RWPE1 (cell line): ENCODE measurements at regions of chr9 and their contacts with region 1.

Region 1: DNA sequence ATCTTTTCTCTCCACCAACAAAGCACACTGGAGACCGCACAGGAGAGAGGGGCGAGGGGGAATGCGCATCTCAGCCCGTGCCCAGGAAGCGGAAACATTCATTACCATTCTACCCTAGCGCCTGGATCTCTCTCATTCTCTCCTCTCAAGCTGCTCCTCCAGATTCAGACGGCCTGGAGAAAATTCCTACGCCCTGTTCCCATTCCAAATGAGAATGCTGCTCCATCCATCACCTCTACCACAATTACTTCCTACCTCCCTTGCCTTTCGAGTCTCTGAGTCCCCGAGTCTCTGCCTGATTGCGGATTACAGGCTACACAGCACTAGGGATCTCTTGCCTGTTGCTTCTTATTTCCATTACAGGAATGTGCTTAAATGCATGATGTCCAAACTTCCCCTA is 6.7 kb downstream of the DDX31 start:
- DNase-seq: no peak
- H3K27ac ChIP-seq: no peak overlapping the region
- CTCF ChIP-seq: no peak

Region 2: DNA sequence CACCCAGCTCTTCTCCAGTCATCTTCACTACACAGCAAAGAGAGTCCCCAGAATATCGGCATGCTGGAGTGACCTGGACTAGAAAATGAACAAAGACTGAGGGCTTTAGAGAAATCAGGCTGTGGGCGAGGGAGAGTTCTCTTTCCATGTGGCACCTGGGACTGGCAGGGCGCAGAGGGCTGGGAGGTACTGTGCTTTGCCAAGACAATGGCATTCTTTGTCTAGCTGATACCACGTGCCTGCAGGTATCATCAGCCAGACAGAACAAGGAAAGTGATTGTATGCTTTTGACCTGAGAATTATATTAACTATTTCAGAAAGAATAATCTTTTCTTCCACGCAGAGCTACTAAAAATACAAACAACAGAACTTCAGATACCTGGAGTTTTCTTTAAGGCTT is 23.8 kb before region 1 on chr9:
- CTCF ChIA-PET with region 1: no interaction called
- POLR2A ChIA-PET with region 1: no interaction called
- DNase-seq: no peak
- H3K27ac ChIP-seq: no peak overlapping the region; the same call in 1 of the 2 replicates
- CTCF ChIP-seq: no peak

Region 3: DNA sequence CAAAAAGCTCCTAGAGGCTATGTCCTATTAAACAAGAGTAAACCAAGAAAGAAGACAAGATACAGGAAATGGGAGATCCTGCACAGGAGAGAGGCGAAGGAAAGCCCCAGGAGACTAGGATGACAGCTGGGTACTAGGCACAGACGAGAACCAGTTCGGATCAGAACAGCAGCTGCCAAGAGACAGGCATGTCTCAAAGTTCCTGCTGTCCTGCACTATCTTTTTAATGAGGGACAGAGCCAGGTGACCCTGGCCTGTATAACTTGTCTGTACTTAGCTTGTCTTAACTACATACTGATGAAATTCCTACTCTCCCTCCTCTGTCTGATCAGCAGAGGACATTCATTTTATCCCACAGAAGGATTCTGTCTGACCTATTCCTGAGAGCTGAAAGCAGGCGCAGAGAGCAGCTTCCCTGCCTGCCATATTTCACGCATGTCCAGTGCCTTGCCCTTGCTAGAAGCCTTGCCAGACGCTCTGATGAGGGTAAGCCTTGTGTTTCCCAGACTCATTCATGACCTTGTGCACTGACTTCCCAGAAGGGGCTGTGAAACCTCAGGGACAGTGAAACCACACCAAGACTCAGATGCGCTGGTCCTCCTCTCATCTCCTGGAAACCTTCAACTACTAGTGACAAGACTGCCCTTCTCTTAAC is 256.6 kb after region 1 on chr9:
- CTCF ChIA-PET with region 1: no interaction called
- POLR2A ChIA-PET with region 1: interaction called, 11 read pairs
- DNase-seq: no peak
- H3K27ac ChIP-seq: no peak overlapping the region
- CTCF ChIP-seq: no peak